Testis (tissue), 5 donors: ENCODE measurements at regions of chr2 and their contacts with region 1.

Region 1: DNA sequence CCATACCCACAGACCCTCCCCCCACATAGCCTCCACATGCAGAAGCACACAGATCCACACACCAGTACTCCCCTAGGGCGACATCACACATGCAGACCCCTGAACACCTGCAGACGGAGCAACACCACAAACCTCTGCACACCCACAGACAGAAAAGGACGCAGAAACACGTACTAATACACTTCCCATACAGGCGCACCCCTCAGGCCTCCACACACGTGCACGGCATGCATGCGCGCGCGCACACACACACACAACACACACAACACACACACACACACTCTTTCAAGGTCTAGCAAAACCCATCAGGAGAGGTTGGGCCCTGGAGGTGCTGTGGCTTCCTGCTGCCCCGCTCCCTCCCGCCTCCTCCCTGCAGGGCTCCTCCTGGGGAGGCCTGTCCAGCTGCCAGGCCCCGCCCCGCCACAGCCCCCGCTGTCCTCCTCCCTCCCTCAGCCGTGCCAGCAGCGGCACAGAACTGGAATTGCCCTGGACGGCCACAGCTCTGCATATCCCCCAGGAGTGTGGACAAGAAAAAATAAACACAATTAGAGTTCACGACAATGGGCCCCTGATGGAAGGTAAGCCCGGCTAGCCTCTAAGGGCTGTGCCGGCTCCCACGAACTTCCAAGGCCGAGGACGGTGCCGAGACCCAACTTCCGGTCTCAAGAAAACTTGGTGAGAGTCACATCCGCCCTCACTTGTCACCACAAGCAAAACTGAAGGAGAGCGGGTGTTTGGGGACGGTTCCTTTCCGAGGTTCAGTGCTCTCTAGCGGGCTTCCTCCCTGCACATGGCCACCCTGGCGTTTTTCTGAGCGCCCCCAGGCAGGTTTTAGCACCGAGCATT is 6.8 kb downstream of the ZFP36L2 start:
- DNase-seq: peak; percentile 89
- H3K4me3 ChIP-seq: peak overlapping the region; percentile 53 to 66
- H3K27ac ChIP-seq: peak overlapping the region; percentile 92 to 100
- H3K4me1 ChIP-seq: peaks cover 43% of the 10 kb centered on the region
- H3K27me3 ChIP-seq: no peaks in the 10 kb centered on the region
- CTCF ChIP-seq: no peak
- POLR2A ChIP-seq: no peak

Region 2: GRCh38 chr2:43024515-43025011 is 195.0 kb before region 1 on chr2:
- intact Hi-C with region 1: loop called (anchors 5 kb)
- DNase-seq: peak; percentile 66
- H3K4me3 ChIP-seq: no peak overlapping the region
- H3K27ac ChIP-seq: no peak overlapping the region
- H3K4me1 ChIP-seq: peaks cover 8% of the 10 kb centered on the region
- H3K27me3 ChIP-seq: no peaks in the 10 kb centered on the region
- CTCF ChIP-seq: peak; percentile 56 to 74 (median 69)
- POLR2A ChIP-seq: no peak

Region 3: DNA sequence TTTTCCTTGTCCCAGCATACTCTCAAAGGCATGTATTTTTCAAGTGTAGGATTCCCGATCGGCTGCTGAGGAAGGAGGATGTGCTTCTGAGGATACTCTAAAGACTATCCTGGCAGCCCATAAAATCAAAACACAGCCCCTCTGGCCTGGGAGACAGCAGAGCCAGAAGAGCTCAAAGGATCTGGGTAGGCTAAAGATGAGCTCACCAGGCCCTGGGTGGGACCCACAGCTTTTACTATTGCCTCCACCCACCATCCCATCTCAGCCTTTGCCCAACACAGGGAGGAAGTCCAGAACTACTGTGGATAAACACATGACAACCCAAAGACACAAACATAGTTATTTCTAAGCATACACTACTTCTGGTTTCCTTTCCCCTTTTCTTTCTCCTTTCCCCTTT is 85.9 kb after region 1 on chr2:
- intact Hi-C with region 1: no loop called
- DNase-seq: no peak
- H3K4me3 ChIP-seq: no peak overlapping the region
- H3K27ac ChIP-seq: peak overlapping the region; percentile 57 to 79
- H3K4me1 ChIP-seq: peaks cover 38% of the 10 kb centered on the region
- H3K27me3 ChIP-seq: no peaks in the 10 kb centered on the region
- CTCF ChIP-seq: no peak
- POLR2A ChIP-seq: no peak

Region 4: DNA sequence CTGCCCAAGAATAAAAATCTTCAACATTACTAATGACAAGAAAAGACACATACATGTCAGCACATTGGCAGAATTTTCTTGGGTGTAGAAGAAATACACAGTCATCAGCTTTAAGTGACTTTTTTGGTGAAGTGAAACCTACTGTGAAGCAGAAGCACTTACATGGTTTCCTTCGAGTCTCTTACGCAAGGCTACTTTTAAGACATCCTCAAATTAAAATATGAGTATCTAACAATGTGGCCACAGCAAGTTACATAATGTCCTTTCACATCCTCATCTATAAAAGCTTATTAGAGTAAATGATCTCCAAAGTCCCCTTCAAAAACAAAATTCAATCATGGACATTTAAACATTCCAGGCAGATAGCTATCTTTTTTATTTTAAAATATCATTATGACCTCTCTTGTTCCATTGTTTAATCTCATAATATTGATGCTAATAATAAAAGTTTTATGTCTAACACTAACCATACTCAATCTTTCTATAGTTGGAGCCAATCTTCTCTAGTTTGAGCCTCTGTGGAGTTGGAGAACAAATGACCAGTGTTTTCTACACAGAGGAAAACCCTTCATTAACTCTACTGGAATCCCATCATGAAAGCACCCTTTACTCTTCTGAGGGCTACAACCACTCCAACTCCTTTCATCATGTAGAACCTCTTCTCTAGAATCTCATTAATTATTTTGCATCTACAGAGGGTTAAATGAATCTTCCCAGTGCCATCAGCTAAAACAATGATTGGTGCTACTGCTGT is 189.0 kb after region 1 on chr2:
- intact Hi-C with region 1: no loop called
- DNase-seq: no peak
- H3K4me3 ChIP-seq: no peak overlapping the region
- H3K27ac ChIP-seq: no peak overlapping the region
- H3K4me1 ChIP-seq: no peaks in the 10 kb centered on the region
- H3K27me3 ChIP-seq: no peaks in the 10 kb centered on the region
- CTCF ChIP-seq: no peak
- POLR2A ChIP-seq: no peak